Activated naive CD8-positive, alpha-beta T cell treated with anti-CD3 and anti-CD28 coated beads, Interleukin-2, amount 10 ng/mL, durations not matched to agents 7 days and 5 days (primary cell): ENCODE measurements at regions of chr11 and their contacts with region 1.

Region 1: DNA sequence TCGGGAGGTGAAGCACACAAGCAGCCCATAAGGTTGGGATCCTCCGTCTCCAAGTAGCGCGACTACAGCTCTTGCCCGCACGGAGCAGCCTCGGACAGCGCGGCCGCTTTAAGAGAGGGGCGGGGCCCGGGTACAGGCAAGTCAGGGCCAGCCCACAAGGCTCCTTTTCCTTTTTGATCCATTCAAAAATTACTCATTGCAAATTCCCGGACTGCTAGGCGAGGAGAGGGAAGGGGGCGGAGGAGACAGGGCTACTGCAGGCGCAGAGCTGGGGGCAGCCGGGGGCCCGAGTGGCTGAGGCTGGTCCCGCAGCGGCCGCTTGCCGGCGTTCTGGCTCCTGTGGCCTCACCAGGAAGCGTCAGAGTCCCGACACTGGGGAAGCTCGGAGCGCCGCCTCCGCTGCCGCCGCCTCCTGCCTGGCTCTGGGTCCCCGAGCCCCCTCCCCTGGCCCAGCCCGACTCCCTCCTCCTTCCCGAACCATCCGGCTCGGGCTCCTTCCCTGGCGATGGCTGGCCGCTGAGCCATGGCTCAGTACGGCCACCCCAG is at the start of gene UBASH3B:
- DNase-seq: peak; percentile 77
- ATAC-seq: peak; percentile 76
- H3K4me3 Mint-ChIP-seq: peak within 1 kb of the TSS; percentile 90
- H3K27ac Mint-ChIP-seq: peak within 1 kb of the TSS; percentile 88
- H3K4me1 Mint-ChIP-seq: peaks cover 35% of the 10 kb centered on the region
- H3K27me3 Mint-ChIP-seq: peaks cover 18% of the 10 kb centered on the region
- total RNA-seq, gene UBASH3B: 40.7 to 44.8 TPM

Region 2: GRCh38 chr11:122637541-122637940 is 18.1 kb before region 1 on chr11:
- POLR2A ChIA-PET with region 1: interaction called, 10 read pairs
- DNase-seq: no peak
- ATAC-seq: peak; percentile 85
- H3K4me3 Mint-ChIP-seq: peak overlapping the region; percentile 23
- H3K27ac Mint-ChIP-seq: peak overlapping the region; percentile 52
- H3K4me1 Mint-ChIP-seq: peaks cover 19% of the 10 kb centered on the region
- H3K27me3 Mint-ChIP-seq: peaks cover 6% of the 10 kb centered on the region

Region 3: GRCh38 chr11:122673701-122674100 is 18.1 kb after region 1 on chr11:
- POLR2A ChIA-PET with region 1: interaction called, 30 read pairs
- DNase-seq: no peak
- ATAC-seq: no peak
- H3K4me3 Mint-ChIP-seq: no peak overlapping the region
- H3K27ac Mint-ChIP-seq: no peak overlapping the region
- H3K4me1 Mint-ChIP-seq: peaks cover 39% of the 10 kb centered on the region
- H3K27me3 Mint-ChIP-seq: no peaks in the 10 kb centered on the region

Region 4: GRCh38 chr11:122697636-122698167 is 42.1 kb after region 1 on chr11:
- POLR2A ChIA-PET with region 1: interaction called, 21 read pairs
- DNase-seq: no peak
- ATAC-seq: peak; percentile 84
- H3K4me3 Mint-ChIP-seq: peak overlapping the region; percentile 76
- H3K27ac Mint-ChIP-seq: peak overlapping the region; percentile 93
- H3K4me1 Mint-ChIP-seq: peaks cover 48% of the 10 kb centered on the region
- H3K27me3 Mint-ChIP-seq: no peaks in the 10 kb centered on the region

Region 5: GRCh38 chr11:122727101-122727929 is 71.7 kb after region 1 on chr11:
- POLR2A ChIA-PET with region 1: interaction called, 15 read pairs
- DNase-seq: no peak
- ATAC-seq: peak; percentile 72
- H3K4me3 Mint-ChIP-seq: peak overlapping the region; percentile 82
- H3K27ac Mint-ChIP-seq: peak overlapping the region; percentile 93
- H3K4me1 Mint-ChIP-seq: peaks cover 62% of the 10 kb centered on the region
- H3K27me3 Mint-ChIP-seq: no peaks in the 10 kb centered on the region

Region 6: DNA sequence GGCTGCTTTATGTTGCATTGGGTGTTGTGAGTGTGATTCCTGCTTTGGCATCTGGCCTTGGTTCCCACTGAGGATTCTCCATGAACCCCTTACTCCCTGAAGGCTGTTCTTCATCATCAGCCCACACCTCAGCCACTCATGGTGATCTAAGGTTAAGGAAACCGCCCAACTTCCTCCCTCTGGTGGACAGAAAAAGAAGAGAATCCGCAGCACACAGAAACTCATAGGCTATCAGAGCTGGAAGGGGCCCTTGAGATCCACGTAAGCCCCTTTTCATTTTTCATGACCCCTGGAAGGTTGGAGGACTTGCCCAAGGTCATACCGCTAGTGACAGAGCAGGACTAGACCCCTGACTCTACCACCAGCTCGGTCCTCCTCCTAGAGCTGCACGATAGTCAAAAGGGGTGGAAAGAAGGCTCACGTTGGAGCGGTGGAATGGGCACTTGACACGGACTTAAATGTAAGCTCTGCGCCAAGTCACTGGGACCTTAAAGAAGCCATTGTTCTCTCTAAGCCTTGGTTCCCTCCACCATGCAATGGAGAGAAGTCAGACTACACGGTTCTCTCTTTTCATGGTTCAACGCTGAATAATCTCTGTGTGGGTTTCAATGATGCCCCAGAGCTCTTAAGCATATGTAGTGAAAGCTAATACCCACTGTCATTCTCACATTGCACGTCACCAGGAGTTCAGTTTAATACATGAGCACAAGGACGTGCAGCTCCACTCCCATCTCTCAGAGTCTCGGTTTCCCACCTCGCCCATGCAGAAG is 99.1 kb after region 1 on chr11:
- POLR2A ChIA-PET with region 1: interaction called, 43 read pairs
- DNase-seq: no peak
- ATAC-seq: peak; percentile 32
- H3K4me3 Mint-ChIP-seq: no peak overlapping the region
- H3K27ac Mint-ChIP-seq: peak overlapping the region; percentile 68
- H3K4me1 Mint-ChIP-seq: peaks cover 76% of the 10 kb centered on the region
- H3K27me3 Mint-ChIP-seq: no peaks in the 10 kb centered on the region